ENCODE measurements at regions of chr6 and their contacts with region 1.

Region 1: GRCh38 chr6:41602864-41603608 is 35.2 kb upstream of the MDFI start:
- DNase-seq: peak; percentile 82
- ATAC-seq: peak; percentile 93
- H3K4me3 ChIP-seq: no peak overlapping the region
- H3K27ac ChIP-seq: no peak overlapping the region
- H3K4me1 ChIP-seq: no peaks in the 10 kb centered on the region
- H3K27me3 ChIP-seq: no peaks in the 10 kb centered on the region; the same call in 1 of the 2 replicates
- CTCF ChIP-seq: peak; percentile 93
- POLR2A ChIP-seq: no peak
- RAD21 ChIP-seq: peak; percentile 85

Region 2: GRCh38 chr6:41367700-41368099 is 235.3 kb before region 1 on chr6:
- CTCF ChIA-PET with region 1: interaction called, 7 read pairs
- POLR2A ChIA-PET with region 1: no interaction called
- dilution Hi-C with region 1: no loop called
- in situ Hi-C with region 1: no loop called
- intact Hi-C with region 1: loop called (anchors 1 kb)
- DNase-seq: peak; percentile 48
- ATAC-seq: peak; percentile 82
- H3K4me3 ChIP-seq: no peak overlapping the region
- H3K27ac ChIP-seq: no peak overlapping the region
- H3K4me1 ChIP-seq: no peaks in the 10 kb centered on the region; the same call in 1 of the 2 replicates
- H3K27me3 ChIP-seq: peaks cover 29% of the 10 kb centered on the region
- CTCF ChIP-seq: peak; percentile 77
- POLR2A ChIP-seq: no peak
- RAD21 ChIP-seq: peak; percentile 79

Region 3: DNA sequence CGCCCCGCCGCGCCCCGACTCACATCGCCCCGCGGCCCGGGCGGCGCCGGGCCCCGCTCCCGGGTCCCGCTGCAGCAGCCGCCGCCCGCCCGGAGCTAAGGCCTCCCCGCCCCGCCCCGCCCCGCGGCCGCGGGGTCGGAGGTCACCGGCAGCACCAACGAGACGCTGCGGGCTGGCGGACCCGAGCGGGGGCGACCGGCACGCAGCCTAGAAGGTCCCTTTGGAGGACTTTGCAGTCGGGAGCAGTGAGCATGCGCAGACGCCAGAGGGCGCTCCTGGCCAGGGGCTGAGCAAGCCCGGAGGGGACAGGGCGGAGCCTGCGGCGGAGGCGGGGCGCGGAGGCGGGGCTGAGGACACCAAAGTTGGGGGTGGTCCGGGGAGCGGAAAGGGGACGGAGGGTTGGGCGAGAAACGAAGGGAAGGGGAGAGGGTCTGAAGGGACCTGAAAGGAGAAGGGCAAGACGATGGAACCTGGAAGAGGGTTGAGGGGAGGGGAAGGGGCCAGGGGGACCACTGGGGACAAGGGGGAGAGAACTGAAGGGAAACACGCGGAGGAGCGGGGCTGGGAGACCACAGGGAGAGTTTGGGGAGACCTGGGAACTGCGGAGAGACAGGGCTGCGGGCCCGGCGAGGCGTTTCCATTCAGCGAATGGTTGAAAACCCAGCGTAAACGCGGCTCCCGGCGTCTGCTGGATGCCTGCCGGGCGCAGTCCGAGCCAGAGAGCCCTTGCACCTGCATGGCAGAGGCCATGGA is 176.9 kb after region 1 on chr6 and contains the start of gene FRS3:
- CTCF ChIA-PET with region 1: no interaction called
- POLR2A ChIA-PET with region 1: no interaction called
- dilution Hi-C with region 1: no loop called
- in situ Hi-C with region 1: no loop called
- intact Hi-C with region 1: loop called (anchors 1 kb)
- DNase-seq: peak; percentile 92
- ATAC-seq: peak; percentile 95
- H3K4me3 ChIP-seq: peak within 1 kb of the TSS; percentile 54
- H3K27ac ChIP-seq: peak within 1 kb of the TSS; percentile 38
- H3K4me1 ChIP-seq: peaks cover 9% of the 10 kb centered on the region
- H3K27me3 ChIP-seq: no peaks in the 10 kb centered on the region
- CTCF ChIP-seq: peak; percentile 97
- POLR2A ChIP-seq: no peak
- RAD21 ChIP-seq: peak; percentile 94
- total RNA-seq, gene FRS3: 0.28 and 0.54 TPM in 2 replicates